CD8-positive, alpha-beta T cell (primary cell): ENCODE measurements at regions of chr2 and their contacts with region 1.

Region 1: GRCh38 chr2:157327621-157328500 is 2.2 kb upstream of the ERMN start:
- DNase-seq: peak; percentile 75 to 94 (median 89)
- ATAC-seq: peak; percentile 95
- H3K4me3 ChIP-seq: peak overlapping the region in 1 of 2 experiments; percentile 2
- H3K4me3 Mint-ChIP-seq: peak overlapping the region; percentile 64
- H3K27ac ChIP-seq: no peak overlapping the region
- H3K27ac Mint-ChIP-seq: peak overlapping the region; percentile 86
- H3K4me1 ChIP-seq: peaks cover 36% of the 10 kb centered on the region
- H3K4me1 Mint-ChIP-seq: peaks cover 53% of the 10 kb centered on the region
- H3K27me3 ChIP-seq: no peaks in the 10 kb centered on the region
- H3K27me3 Mint-ChIP-seq: no peaks in the 10 kb centered on the region
- CTCF ChIP-seq: peak; percentile 87

Region 2: GRCh38 chr2:157404363-157404762 is 76.5 kb after region 1 on chr2:
- CTCF ChIA-PET with region 1: interaction called, 37 read pairs
- POLR2A ChIA-PET with region 1: interaction called, 7 read pairs
- intact Hi-C with region 1: loop called (anchors 2 to 5 kb)
- DNase-seq: peak; percentile 56 to 92 (median 72)
- ATAC-seq: peak; percentile 92
- H3K4me3 ChIP-seq: no peak overlapping the region
- H3K4me3 Mint-ChIP-seq: peak overlapping the region; percentile 44
- H3K27ac ChIP-seq: peak overlapping the region; percentile 65 to 69
- H3K27ac Mint-ChIP-seq: peak overlapping the region; percentile 99
- H3K4me1 ChIP-seq: peaks cover 55% of the 10 kb centered on the region
- H3K4me1 Mint-ChIP-seq: peaks cover 69% of the 10 kb centered on the region
- H3K27me3 ChIP-seq: no peaks in the 10 kb centered on the region
- H3K27me3 Mint-ChIP-seq: no peaks in the 10 kb centered on the region
- CTCF ChIP-seq: no peak

Region 3: DNA sequence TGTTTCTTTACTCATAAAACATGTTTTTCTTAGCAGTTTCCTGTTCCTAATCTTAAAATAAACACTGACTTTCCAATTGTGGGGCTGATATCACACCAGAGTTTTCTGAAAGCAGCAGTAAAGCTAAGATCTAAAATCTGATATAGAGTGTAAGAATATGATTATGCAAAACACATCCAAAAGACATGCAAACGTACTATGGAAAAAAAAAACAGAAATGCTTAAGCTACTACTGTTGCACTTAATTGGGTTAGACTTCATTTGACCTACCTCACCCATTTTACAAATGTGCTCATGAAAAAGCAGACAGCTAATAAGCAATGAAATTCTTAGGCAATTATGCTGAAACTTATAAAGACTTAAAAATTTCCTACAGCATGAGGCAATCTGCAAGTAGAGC is 105.5 kb after region 1 on chr2:
- CTCF ChIA-PET with region 1: interaction called, 303 read pairs
- POLR2A ChIA-PET with region 1: interaction called, 26 read pairs
- intact Hi-C with region 1: no loop called
- DNase-seq: no peak
- ATAC-seq: peak; percentile 10
- H3K4me3 ChIP-seq: peak overlapping the region; percentile 57 to 83
- H3K4me3 Mint-ChIP-seq: peak overlapping the region; percentile 80
- H3K27ac ChIP-seq: peak overlapping the region; percentile 44 to 92
- H3K27ac Mint-ChIP-seq: peak overlapping the region; percentile 91
- H3K4me1 ChIP-seq: peaks cover 65% of the 10 kb centered on the region
- H3K4me1 Mint-ChIP-seq: peaks cover 85% of the 10 kb centered on the region
- H3K27me3 ChIP-seq: no peaks in the 10 kb centered on the region
- H3K27me3 Mint-ChIP-seq: no peaks in the 10 kb centered on the region
- CTCF ChIP-seq: no peak

Region 4: DNA sequence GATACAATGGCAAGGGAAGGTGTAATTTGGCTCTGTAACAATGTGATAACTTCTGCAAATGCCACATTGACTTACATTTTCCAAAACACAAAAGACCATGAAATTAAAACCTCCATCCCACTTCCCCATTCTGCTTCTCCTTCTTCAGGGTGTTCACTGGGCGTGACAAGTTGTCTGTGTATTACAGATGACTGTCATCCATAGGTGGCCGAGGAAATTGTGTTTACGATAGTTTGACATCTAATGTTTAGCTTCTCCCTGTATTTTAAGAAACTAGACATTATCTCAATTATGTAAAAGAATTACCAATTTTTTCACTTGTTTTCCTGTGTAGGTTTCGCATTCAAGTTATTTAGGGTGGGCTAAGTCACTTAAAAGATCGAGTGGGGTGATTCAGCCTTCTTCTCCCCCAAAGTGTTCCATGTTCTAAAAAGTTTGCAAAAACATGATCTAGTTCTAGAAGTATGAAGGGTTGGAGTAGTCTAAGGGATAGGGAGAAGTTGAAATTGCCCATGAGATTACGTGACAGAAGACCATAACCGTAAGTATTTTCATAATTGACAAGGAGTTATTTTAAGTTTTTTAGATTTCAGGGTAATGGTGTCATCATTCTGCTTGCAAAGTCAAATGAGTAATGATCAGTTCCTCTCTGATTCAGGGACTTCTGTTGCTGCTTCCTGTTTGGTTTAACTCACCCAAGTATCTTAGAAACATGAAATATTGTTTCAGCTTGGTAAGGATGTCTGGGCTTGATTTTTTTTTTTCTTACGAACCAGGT is 141.3 kb after region 1 on chr2:
- CTCF ChIA-PET with region 1: interaction called, 19 read pairs
- POLR2A ChIA-PET with region 1: interaction called, 9 read pairs
- intact Hi-C with region 1: no loop called
- DNase-seq: peak in 2 of 9 experiments; percentile 70 to 85
- ATAC-seq: peak; percentile 87
- H3K4me3 ChIP-seq: peak overlapping the region in 1 of 2 experiments; percentile 2
- H3K4me3 Mint-ChIP-seq: peak overlapping the region; percentile 57
- H3K27ac ChIP-seq: peak overlapping the region; percentile 67 to 73
- H3K27ac Mint-ChIP-seq: peak overlapping the region; percentile 96
- H3K4me1 ChIP-seq: peaks cover 43% of the 10 kb centered on the region
- H3K4me1 Mint-ChIP-seq: peaks cover 67% of the 10 kb centered on the region
- H3K27me3 ChIP-seq: no peaks in the 10 kb centered on the region
- H3K27me3 Mint-ChIP-seq: no peaks in the 10 kb centered on the region
- CTCF ChIP-seq: no peak

Region 5: GRCh38 chr2:157497638-157498314 is 169.9 kb after region 1 on chr2:
- CTCF ChIA-PET with region 1: interaction called, 82 read pairs
- POLR2A ChIA-PET with region 1: interaction called, 9 read pairs
- intact Hi-C with region 1: loop called (anchors 1 to 2 kb)
- DNase-seq: peak in 2 of 9 experiments; percentile 49 to 62
- ATAC-seq: peak; percentile 91
- H3K4me3 ChIP-seq: no peak overlapping the region
- H3K4me3 Mint-ChIP-seq: no peak overlapping the region
- H3K27ac ChIP-seq: no peak overlapping the region
- H3K27ac Mint-ChIP-seq: no peak overlapping the region
- H3K4me1 ChIP-seq: peaks cover 7% of the 10 kb centered on the region
- H3K4me1 Mint-ChIP-seq: peaks cover 33% of the 10 kb centered on the region
- H3K27me3 ChIP-seq: no peaks in the 10 kb centered on the region
- H3K27me3 Mint-ChIP-seq: no peaks in the 10 kb centered on the region
- CTCF ChIP-seq: peak; percentile 71